ENCODE measurements at regions of chr10 and their contacts with region 1.

Region 1: DNA sequence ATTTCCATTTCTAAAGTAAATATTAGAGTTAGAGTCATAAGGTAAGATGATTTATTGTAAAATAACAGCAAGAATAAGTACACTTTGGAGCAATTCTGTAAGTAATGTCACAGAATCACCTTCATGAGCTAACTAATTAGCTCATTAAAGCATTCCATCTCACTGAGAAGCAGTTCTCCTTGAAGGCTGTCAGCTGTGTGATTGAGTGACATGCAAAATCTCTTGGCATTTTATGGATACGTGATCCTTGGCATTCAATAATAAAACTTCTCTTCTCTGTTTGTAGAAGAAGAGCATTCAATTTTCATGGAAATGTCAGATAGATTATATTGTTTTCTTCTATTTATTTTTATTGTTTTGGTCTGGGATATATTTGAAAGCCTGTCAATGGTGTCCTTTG is 1389.3 kb downstream of the GATA3 start:
- DNase-seq: no peak
- ATAC-seq: no peak
- H3K4me3 ChIP-seq: no peak overlapping the region
- H3K27ac ChIP-seq: no peak overlapping the region
- H3K4me1 ChIP-seq: no peaks in the 10 kb centered on the region
- H3K27me3 ChIP-seq: no peaks in the 10 kb centered on the region
- CTCF ChIP-seq: no peak

Region 2: DNA sequence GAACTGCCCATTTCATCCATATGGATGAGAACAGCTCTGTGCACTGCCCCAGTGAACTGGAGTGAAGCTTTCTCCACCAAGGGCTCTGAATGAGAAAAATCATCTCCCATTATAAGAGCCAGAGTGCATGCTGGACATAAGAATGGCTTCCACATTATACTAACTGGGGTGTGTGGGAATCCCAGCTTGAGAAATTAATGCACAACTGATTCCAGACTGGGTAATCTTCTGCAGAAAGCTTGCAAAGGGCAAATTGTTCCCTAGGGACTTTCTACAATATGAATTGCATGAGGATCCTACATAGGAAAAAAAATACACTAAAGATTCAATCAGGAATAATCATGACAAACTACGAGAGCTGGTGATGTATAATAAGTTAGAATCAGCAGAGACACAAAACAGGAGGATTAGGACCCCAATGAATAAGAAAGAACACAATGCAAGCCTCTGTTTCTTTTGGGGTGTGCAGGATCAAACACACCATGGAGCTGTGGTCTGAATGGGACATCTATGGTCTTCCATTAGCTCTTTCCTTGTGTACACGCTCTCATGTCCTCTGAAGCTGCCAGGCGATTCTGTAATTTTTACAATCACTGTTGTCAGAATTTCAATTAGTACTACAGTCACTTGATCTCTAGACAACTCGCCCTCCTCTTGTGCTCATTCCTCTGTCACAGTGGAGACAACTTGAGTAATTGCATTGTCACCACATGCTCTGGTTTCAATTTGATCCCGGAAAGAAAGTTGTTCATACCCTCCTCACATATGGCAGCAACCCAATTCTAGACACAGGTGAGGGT is 61.8 kb before region 1 on chr10:
- intact Hi-C with region 1: loop called in 1 of 3 experiments (anchors 2 kb)
- DNase-seq: no peak
- ATAC-seq: no peak
- H3K4me3 ChIP-seq: no peak overlapping the region
- H3K27ac ChIP-seq: no peak overlapping the region
- H3K4me1 ChIP-seq: no peaks in the 10 kb centered on the region
- H3K27me3 ChIP-seq: no peaks in the 10 kb centered on the region
- CTCF ChIP-seq: no peak

Measured in pancreas (tissue), 10 donors.